Heart right ventricle (tissue), 16 donors: ENCODE measurements at regions of chr2 and their contacts with region 1.

Region 1: DNA sequence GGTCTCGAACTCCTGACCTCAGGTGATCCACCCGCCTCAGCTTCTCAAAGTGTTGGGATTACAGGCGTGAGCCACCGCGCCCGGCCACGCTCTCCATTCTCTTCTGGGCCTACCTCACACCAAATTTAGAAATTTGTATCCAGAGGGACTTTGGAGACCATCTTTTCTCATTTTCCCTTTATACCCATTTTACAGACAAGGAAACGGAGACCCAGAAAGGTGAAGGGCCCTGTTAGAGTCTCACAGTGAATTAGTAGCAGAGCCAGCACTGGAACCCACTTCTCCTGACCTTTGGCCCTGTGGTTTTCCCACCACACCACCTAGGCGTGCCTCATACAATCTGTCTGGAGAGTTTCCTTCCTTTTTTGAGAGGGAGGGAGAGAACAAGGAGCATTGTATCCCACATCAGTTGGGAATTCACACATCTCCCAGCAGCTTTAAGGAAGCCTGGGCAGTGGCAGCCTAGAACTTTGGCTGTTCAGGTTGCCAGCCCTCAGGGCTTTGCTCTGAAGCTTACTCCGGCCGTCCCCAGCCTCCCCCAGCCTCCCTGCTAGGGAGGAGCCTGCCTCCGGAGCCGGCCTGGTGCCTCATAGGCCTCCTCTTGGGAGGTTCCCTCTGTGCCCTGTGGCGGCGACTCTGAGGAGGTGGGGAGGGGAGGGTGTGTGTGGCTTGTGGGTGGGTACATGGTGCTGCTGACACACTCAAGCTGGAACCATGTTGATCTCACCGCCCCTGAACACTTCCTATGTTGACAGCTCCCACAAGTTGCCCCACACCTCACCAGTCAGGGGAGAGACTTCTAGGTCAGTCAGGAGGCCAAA is 13.8 kb downstream of the FOSL2 start:
- DNase-seq: peak in 1 of 2 donors; percentile 49
- ATAC-seq: peak in 7 of 8 donors; percentile 15 to 49 (median 24)
- H3K4me3 ChIP-seq: peak overlapping the region in 1 of 10 donors; percentile 3
- H3K27ac ChIP-seq: peak overlapping the region in 7 of 10 donors; percentile 23 to 87 (median 53)
- H3K4me1 ChIP-seq: peaks cover 0 to 98% (median 44%) of the 10 kb centered on the region in 9 donors
- H3K27me3 ChIP-seq: no peaks in the 10 kb centered on the region
- CTCF ChIP-seq: no peak

Region 2: GRCh38 chr2:27703638-27704341 is 702.7 kb before region 1 on chr2:
- intact Hi-C with region 1: loop called in 1 of 10 experiments (anchors 10 kb)
- DNase-seq: peak; percentile 70 to 89
- ATAC-seq: peak; percentile 32 to 76 (median 62)
- H3K4me3 ChIP-seq: no peak overlapping the region
- H3K27ac ChIP-seq: peak overlapping the region in 2 of 10 donors; percentile 36 to 79
- H3K4me1 ChIP-seq: peaks cover 7 to 45% (median 28%) of the 10 kb centered on the region in 9 donors
- H3K27me3 ChIP-seq: no peaks in the 10 kb centered on the region
- CTCF ChIP-seq: peak; percentile 88 to 95 (median 93)